Mammary epithelial cell (primary cell): ENCODE measurements at regions of chr3 and their contacts with region 1.

Region 1: DNA sequence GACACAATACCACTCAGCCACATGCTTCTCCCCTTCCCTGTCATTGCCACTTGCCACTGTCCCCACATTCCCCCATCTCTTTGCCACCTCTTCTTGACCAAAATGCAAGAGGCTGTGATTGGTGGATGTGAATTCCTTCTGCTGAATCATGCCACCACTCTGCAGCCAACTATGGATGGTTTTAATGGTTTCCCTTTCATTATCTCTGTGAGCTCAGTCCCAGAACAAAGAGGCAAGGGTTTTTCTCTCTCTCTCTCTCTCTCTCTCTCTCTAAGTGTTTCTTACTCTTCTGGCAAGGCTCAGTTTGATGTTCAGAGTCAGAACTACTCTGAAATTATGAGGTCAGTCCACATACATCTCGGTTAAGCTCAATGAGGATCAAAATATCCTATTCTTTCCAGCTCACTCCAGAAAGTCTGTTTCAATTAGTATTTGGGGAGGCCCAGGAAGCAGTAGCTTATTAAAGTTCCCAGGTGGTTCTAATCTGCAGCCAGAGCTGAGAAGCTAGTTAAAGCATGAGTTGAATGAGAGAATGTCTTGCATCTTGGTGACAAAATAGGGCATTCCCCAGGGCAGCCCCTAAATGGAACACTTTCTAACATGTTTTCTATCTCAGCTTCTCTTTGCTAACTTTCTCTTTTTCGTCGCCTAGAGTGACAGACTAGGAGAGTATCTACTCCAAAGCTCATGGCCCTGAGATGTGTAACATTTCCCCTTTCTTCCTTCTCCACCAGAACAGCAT is 8.5 kb upstream of the ILDR1 start:
- DNase-seq: no peak
- H3K4me3 ChIP-seq: no peak overlapping the region
- H3K27ac ChIP-seq: no peak overlapping the region
- H3K4me1 ChIP-seq: no peaks in the 10 kb centered on the region
- H3K27me3 ChIP-seq: no peaks in the 10 kb centered on the region
- CTCF ChIP-seq: no peak

Region 2: GRCh38 chr3:120129718-120130513 is 1900.6 kb before region 1 on chr3:
- CTCF ChIA-PET with region 1: interaction called, 10 read pairs
- dilution Hi-C with region 1: no loop called
- in situ Hi-C with region 1: no loop called
- intact Hi-C with region 1: no loop called
- DNase-seq: peak; percentile 28
- H3K4me3 ChIP-seq: no peak overlapping the region
- H3K27ac ChIP-seq: no peak overlapping the region
- H3K4me1 ChIP-seq: no peaks in the 10 kb centered on the region
- H3K27me3 ChIP-seq: no peaks in the 10 kb centered on the region
- CTCF ChIP-seq: no peak

Region 3: GRCh38 chr3:121979734-121980449 is 50.7 kb before region 1 on chr3:
- CTCF ChIA-PET with region 1: no interaction called
- dilution Hi-C with region 1: no loop called
- in situ Hi-C with region 1: no loop called
- intact Hi-C with region 1: no loop called
- DNase-seq: peak; percentile 69
- H3K4me3 ChIP-seq: peak overlapping the region in 2 of 3 experiments; percentile 26
- H3K27ac ChIP-seq: peak overlapping the region; percentile 46
- H3K4me1 ChIP-seq: peaks cover 37% of the 10 kb centered on the region
- H3K27me3 ChIP-seq: no peaks in the 10 kb centered on the region
- CTCF ChIP-seq: no peak

Region 4: DNA sequence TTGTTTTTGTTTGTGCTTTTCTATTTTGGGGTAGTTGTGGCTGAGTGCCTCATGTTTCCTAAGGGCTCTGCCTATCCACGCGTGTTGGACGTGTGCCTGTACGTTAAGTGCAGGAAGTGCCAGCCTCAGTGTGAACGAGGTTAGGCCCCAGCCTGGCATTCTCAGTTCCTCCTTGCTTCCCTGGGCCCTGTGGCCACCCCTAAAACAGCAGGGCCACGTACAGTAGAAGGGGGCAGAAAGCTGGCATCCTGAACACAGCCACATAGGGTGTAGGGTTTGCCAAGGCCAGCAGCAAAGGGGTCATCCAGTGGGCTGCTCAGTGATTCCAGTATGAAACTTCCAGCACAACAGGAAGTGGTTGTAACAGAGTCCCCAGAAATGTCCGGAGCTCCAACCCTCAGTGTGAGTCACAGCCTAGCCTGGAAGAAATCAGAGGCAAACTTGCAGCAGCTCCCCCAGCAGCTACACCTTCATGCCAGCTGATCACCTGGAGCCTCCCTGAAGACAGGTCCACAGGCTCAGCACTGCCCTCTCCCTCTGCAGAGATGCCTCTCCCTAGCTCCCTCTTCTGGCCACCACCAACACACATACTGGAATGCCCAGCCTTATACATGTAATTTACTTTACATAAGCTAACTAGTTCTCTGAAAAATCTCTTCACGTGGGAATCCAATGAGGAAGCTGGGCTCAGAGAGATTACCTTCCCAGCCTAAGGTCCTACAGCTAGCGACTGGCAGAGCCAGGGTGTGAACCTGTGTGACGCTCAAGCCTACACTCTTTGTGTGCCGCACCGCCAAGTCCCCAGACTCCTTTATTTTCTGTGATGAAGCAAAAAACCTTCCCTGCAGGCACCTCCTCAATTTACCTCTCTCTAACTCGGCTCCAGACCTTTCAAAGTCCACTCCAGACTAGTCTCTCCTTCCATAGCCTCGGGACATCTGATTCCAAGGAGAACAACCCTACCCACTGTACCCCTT is 35.1 kb before region 1 on chr3:
- CTCF ChIA-PET with region 1: no interaction called
- dilution Hi-C with region 1: no loop called
- in situ Hi-C with region 1: no loop called
- intact Hi-C with region 1: no loop called
- DNase-seq: peak; percentile 93
- H3K4me3 ChIP-seq: no peak overlapping the region
- H3K27ac ChIP-seq: peak overlapping the region; percentile 55
- H3K4me1 ChIP-seq: peaks cover 27% of the 10 kb centered on the region
- H3K27me3 ChIP-seq: no peaks in the 10 kb centered on the region
- CTCF ChIP-seq: peak; percentile 69 to 73

Region 5: DNA sequence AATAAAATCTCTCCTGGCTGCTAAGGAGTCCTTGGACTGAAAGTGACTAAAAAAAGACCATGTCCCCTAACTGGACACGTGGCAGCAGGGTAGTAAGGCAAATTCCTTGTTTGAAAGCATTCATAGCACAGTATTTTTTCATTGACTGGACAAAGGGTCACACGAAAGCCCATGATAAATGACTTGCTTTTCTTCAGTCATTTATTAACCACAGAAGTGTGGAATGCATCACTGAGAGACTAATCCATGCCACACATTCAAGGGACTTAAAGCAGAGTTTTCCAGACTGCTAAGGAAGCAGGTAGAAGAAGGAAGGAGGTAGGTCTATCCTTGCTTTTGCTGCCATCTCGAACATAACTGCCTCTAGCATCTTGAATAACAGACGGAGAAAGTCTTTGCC is 184.2 kb after region 1 on chr3:
- CTCF ChIA-PET with region 1: no interaction called
- dilution Hi-C with region 1: no loop called
- in situ Hi-C with region 1: no loop called
- intact Hi-C with region 1: no loop called
- DNase-seq: no peak
- H3K4me3 ChIP-seq: no peak overlapping the region
- H3K27ac ChIP-seq: no peak overlapping the region
- H3K4me1 ChIP-seq: no peaks in the 10 kb centered on the region
- H3K27me3 ChIP-seq: peaks cover 3% of the 10 kb centered on the region
- CTCF ChIP-seq: no peak